Activated T-helper 2 cell treated with anti-CD3 and anti-CD28 coated beads, Interferon-gamma antibody, Interleukin-2, Interleukin-4, amounts not matched to agents 10 μg/mL and 5 μg/mL and 100 μg/mL, durations not matched to agents 14 hours and 24 hours and 36 hours (primary cell): ENCODE measurements at regions of chr4 and their contacts with region 1.

Region 1: DNA sequence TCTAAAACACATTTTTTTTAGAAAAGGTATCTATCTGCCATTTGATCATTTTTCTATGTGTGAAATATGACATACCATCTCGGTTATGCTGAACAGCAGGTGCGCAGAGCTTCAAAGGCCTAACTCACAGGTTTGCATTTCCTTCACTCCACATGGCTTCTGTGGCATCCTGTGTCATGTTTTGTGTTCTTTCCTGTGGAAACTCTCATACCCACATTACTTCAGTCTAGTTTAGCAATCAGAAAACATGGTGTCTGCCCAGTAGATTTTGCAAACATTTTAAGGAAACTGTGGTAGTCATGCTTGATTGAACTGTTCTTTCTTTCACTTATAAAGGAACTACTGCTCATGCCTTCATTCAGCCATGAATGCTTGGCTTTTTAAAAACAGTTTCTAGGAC is 11.3 kb upstream of the ARAP2 start:
- DNase-seq: peak; percentile 57
- H3K4me3 Mint-ChIP-seq: peak overlapping the region; percentile 64
- H3K27ac Mint-ChIP-seq: peak overlapping the region; percentile 90
- H3K4me1 Mint-ChIP-seq: peaks cover 45% of the 10 kb centered on the region
- H3K27me3 Mint-ChIP-seq: no peaks in the 10 kb centered on the region

Region 2: DNA sequence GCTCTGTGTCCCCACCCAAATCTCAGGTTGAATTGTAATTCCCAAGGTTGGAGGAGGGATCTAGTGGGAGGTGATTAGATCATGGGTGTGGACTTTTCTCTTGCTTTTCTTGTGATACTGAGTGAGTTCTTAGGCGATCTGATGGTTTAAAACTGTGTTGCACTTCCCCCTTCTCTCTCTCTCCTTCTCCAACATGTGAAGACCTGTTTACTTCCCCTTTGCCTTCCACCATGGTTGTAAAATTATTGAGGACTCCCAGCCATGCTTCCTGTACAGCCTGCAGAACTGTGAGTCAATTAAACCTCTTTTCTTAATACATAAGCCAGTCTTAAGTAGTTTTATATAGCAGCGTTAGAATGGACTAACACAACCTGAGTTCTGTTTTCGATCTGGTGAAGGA is 749.4 kb before region 1 on chr4:
- intact Hi-C with region 1: no loop called
- DNase-seq: no peak
- H3K4me3 Mint-ChIP-seq: no peak overlapping the region
- H3K27ac Mint-ChIP-seq: no peak overlapping the region
- H3K4me1 Mint-ChIP-seq: no peaks in the 10 kb centered on the region
- H3K27me3 Mint-ChIP-seq: no peaks in the 10 kb centered on the region

Region 3: DNA sequence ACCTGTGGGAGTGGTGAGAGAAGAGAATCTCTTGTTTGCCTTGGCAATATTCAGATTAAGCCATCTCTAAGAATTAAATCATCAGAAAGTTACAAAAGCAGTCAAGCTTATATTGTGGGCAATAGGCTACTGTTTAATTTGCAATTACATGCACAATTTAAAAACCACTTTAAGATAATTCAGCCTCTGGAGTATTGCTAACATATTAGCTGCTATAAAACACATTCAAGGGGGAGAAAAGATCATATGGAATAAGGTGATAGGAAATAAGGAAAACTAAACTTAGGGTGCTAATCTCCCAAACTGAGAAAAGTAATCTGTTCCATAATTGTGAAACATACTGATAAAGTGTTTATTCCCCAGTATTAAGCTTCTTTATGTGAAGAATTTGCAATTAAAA is 115.2 kb before region 1 on chr4:
- intact Hi-C with region 1: no loop called
- DNase-seq: no peak
- H3K4me3 Mint-ChIP-seq: no peak overlapping the region
- H3K27ac Mint-ChIP-seq: no peak overlapping the region
- H3K4me1 Mint-ChIP-seq: peaks cover 3% of the 10 kb centered on the region
- H3K27me3 Mint-ChIP-seq: no peaks in the 10 kb centered on the region

Region 4: GRCh38 chr4:36269101-36269500 is 13.5 kb after region 1 on chr4:
- intact Hi-C with region 1: loop called (anchors 2 kb)
- DNase-seq: no peak
- H3K4me3 Mint-ChIP-seq: no peak overlapping the region
- H3K27ac Mint-ChIP-seq: peak overlapping the region; percentile 59
- H3K4me1 Mint-ChIP-seq: peaks cover 46% of the 10 kb centered on the region
- H3K27me3 Mint-ChIP-seq: no peaks in the 10 kb centered on the region

Region 5: DNA sequence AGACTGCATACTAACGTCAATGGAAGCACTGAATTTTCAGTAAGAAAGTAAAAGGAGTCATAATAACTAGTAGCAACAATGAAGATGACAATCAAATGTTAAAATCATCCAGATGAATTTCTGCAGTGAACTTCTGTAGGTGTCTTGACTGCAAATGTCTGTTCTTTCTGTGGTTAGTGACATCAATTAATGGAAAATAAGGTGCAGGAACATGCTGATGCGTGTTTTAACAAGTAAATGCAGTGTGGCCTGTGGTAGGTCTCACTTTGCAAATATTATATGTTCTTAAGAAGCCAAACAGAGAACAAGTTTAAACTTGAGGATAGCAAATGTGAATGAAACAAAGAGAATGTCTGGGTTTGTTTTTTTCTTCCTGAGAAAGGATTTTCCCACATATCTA is 23.2 kb after region 1 on chr4:
- intact Hi-C with region 1: loop called (anchors 1 kb)
- DNase-seq: no peak
- H3K4me3 Mint-ChIP-seq: peak overlapping the region; percentile 3
- H3K27ac Mint-ChIP-seq: peak overlapping the region; percentile 78
- H3K4me1 Mint-ChIP-seq: peaks cover 66% of the 10 kb centered on the region
- H3K27me3 Mint-ChIP-seq: no peaks in the 10 kb centered on the region

Region 6: GRCh38 chr4:36303426-36304137 is 48.0 kb after region 1 on chr4:
- intact Hi-C with region 1: no loop called
- DNase-seq: no peak
- H3K4me3 Mint-ChIP-seq: no peak overlapping the region
- H3K27ac Mint-ChIP-seq: no peak overlapping the region
- H3K4me1 Mint-ChIP-seq: peaks cover 15% of the 10 kb centered on the region
- H3K27me3 Mint-ChIP-seq: peaks cover 11% of the 10 kb centered on the region